Naive thymus-derived CD4-positive, alpha-beta T cell (primary cell): ENCODE measurements at regions of chr15 and their contacts with region 1.

Region 1: DNA sequence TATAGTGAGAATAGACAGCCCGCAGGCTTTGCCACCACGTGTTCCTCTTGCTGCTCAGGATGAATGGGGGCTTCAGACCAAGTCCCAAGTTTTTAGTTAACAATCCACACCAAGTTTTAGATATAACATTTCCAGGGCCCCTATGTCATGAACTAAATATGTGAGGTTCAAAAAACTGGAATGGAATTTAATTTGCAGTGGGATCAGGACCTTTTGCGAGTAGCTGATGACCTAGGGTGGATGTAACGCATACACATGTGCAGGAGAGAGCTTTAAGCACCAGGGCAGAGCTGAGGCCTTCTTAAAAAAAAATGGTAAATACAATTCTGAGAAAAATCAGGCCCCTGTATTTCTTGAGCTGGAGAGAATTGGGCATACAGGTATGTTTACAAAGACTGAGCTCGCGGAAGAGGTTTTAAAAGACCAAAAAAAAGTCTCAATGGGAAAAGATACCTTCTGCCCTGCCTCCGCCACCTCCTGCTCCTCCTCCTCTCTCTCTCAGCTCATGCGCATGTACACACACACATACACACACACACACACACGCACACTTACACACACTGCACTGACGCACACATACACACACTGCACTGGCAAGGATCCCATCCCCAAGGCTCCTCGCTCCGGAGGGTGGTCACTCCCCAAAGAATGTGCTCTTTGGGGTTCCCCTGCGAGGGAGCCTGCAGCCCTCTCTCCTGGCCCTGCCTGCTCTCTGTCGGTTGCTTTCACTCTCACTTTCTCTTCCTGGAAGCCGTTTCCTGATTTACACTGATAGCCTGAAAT is 48.2 kb upstream of the IGF1R start:
- DNase-seq: peak in 8 of 9 donors; percentile 39 to 52 (median 49)
- ATAC-seq: peak; percentile 84
- H3K4me3 ChIP-seq: peak overlapping the region; percentile 70
- H3K4me3 Mint-ChIP-seq: peak overlapping the region; percentile 87 to 99 (median 94)
- H3K27ac ChIP-seq: peak overlapping the region; percentile 77
- H3K27ac Mint-ChIP-seq: peak overlapping the region; percentile 91 to 98 (median 95)
- H3K4me1 ChIP-seq: peaks cover 0 to 15% of the 10 kb centered on the region in 2 donors
- H3K4me1 Mint-ChIP-seq: peaks cover 12 to 44% (median 24%) of the 10 kb centered on the region in 7 donors
- H3K27me3 ChIP-seq: no peaks in the 10 kb centered on the region
- H3K27me3 Mint-ChIP-seq: peaks cover 0 to 23% (median 0%) of the 10 kb centered on the region in 5 donors

Region 2: GRCh38 chr15:98581715-98582114 is 18.4 kb before region 1 on chr15:
- CTCF ChIA-PET with region 1: interaction called, 3 read pairs
- POLR2A ChIA-PET with region 1: interaction called, 6 read pairs
- intact Hi-C with region 1: loop called in 1 of 2 experiments (anchors 1 kb)
- DNase-seq: peak in 6 of 9 donors; percentile 18 to 54 (median 40)
- ATAC-seq: peak; percentile 60
- H3K4me3 ChIP-seq: no peak overlapping the region
- H3K4me3 Mint-ChIP-seq: no peak overlapping the region
- H3K27ac ChIP-seq: no peak overlapping the region
- H3K27ac Mint-ChIP-seq: no peak overlapping the region
- H3K4me1 ChIP-seq: peaks cover 0 to 11% of the 10 kb centered on the region in 2 donors
- H3K4me1 Mint-ChIP-seq: peaks cover 4 to 18% (median 13%) of the 10 kb centered on the region in 7 donors
- H3K27me3 ChIP-seq: peaks cover 0 to 3% of the 10 kb centered on the region in 2 donors
- H3K27me3 Mint-ChIP-seq: peaks cover 22 to 58% (median 34%) of the 10 kb centered on the region in 5 donors

Region 3: DNA sequence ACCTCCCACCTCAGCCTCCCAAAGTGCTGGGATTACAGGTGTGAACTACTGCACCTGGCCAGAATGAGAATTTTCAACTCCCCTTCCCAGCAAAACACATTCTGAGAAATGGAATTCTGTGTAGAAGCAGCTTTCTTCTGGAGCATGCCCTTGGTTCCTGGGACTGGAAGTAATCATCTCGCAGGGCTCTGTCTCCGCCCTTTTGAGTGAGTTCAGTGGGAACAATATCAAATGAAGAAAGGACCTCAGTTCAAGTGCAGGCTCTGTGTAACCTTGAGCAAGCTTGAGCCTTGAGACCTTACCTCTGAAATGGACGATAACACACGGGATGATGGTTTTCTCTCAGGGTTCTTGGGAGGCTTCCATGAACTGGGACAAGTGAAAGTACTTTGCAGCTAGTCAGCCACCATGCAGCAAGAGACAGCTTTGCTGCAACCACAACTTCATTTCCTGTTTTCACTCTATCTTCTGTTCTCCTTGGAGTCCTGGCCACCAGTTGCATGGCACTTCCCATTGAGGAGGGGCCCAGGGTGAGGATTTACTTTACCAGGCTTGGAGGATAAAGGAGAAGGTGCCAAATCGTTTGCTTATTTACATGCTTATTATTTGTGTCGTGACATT is 12.5 kb after region 1 on chr15:
- CTCF ChIA-PET with region 1: interaction called, 4 read pairs
- POLR2A ChIA-PET with region 1: interaction called, 16 read pairs
- intact Hi-C with region 1: no loop called
- DNase-seq: peak in 5 of 9 donors; percentile 14 to 34 (median 27)
- ATAC-seq: peak; percentile 42
- H3K4me3 ChIP-seq: peak overlapping the region; percentile 37
- H3K4me3 Mint-ChIP-seq: peak overlapping the region; percentile 58 to 84 (median 74)
- H3K27ac ChIP-seq: peak overlapping the region; percentile 0
- H3K27ac Mint-ChIP-seq: peak overlapping the region; percentile 34 to 92 (median 78)
- H3K4me1 ChIP-seq: peaks cover 0 to 14% of the 10 kb centered on the region in 2 donors
- H3K4me1 Mint-ChIP-seq: peaks cover 5 to 19% (median 12%) of the 10 kb centered on the region in 7 donors
- H3K27me3 ChIP-seq: no peaks in the 10 kb centered on the region
- H3K27me3 Mint-ChIP-seq: peaks cover 0 to 14% (median 0%) of the 10 kb centered on the region in 5 donors

Region 4: DNA sequence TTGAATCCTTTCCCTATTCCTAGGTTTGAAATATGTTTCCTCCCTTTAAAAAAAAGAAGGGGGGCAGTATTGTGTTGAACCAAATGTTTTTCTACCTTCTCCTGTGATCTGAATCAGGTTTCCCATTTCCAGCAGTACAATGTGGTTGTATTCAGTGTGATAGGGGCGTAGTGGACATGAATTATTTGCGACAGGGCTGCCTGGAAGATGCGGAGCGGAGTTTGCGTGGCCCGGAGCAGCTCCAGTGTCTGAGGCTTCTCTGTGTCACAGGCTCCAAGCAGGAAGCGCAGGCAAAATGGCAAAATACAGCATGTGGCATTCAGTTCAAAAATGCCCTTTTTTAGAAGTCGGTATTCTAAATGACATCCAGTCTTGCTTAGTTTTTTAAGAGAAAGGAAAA is 253.1 kb after region 1 on chr15:
- CTCF ChIA-PET with region 1: no interaction called
- POLR2A ChIA-PET with region 1: no interaction called
- intact Hi-C with region 1: loop called in 1 of 2 experiments (anchors 1 kb)
- DNase-seq: peak; percentile 36 to 74 (median 65)
- ATAC-seq: peak; percentile 68
- H3K4me3 ChIP-seq: peak overlapping the region; percentile 81
- H3K4me3 Mint-ChIP-seq: peak overlapping the region; percentile 87 to 98 (median 93)
- H3K27ac ChIP-seq: peak overlapping the region; percentile 61
- H3K27ac Mint-ChIP-seq: peak overlapping the region; percentile 85 to 97 (median 91)
- H3K4me1 ChIP-seq: peaks cover 19 to 20% of the 10 kb centered on the region in 2 donors
- H3K4me1 Mint-ChIP-seq: peaks cover 39 to 90% (median 85%) of the 10 kb centered on the region in 7 donors
- H3K27me3 ChIP-seq: no peaks in the 10 kb centered on the region
- H3K27me3 Mint-ChIP-seq: no peaks in the 10 kb centered on the region